ENCODE measurements at regions of chr10 and their contacts with region 1.

Region 1: GRCh38 chr10:32041290-32042028 is 14.8 kb downstream of the KIF5B start:
- DNase-seq: no peak
- ATAC-seq: no peak
- H3K4me3 Mint-ChIP-seq: no peak overlapping the region
- H3K27ac Mint-ChIP-seq: no peak overlapping the region
- H3K4me1 Mint-ChIP-seq: peaks cover 30% of the 10 kb centered on the region
- H3K27me3 Mint-ChIP-seq: no peaks in the 10 kb centered on the region
- CTCF ChIP-seq: no peak

Region 2: DNA sequence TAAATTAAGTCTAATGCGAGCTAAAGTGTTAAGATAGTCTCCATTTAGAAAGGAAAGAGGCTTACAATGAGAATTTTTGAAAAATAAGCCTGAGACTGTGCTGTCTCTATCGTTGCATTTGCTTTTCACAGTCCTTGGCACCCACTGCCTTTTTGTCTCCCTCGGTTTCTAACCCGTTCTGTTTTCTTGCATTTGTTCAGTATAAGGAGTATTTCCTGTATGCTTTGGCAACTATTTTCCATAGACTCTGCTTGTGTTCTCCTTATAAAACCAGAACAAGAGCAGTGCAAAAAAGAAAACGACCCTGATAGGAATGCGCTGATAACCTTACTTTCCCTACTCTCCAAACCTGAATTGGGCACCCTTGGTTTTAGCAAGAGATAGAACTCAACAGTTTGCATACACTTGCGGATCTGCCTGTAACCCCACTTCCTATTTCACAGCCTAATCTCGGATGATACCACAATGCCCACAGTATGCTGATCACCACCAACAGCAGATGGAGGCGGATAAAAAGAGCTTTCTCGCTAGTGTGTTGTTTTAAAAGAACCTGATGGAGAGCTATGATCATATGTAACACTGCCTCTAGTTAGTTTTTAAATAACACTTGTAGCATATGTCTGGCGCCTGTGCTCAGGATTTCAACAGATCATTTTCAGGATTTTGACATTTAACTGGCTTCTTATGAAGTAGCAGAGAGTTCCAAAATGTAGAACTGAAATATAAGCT is 111.3 kb before region 1 on chr10:
- CTCF ChIA-PET with region 1: no interaction called
- POLR2A ChIA-PET with region 1: no interaction called
- intact Hi-C with region 1: no loop called
- DNase-seq: no peak
- ATAC-seq: peak; percentile 12
- H3K4me3 Mint-ChIP-seq: peak overlapping the region; percentile 91
- H3K27ac Mint-ChIP-seq: peak overlapping the region; percentile 88
- H3K4me1 Mint-ChIP-seq: peaks cover 33% of the 10 kb centered on the region
- H3K27me3 Mint-ChIP-seq: no peaks in the 10 kb centered on the region
- CTCF ChIP-seq: no peak

Region 3: GRCh38 chr10:32073659-32074058 is 32.2 kb after region 1 on chr10:
- CTCF ChIA-PET with region 1: no interaction called
- POLR2A ChIA-PET with region 1: no interaction called
- intact Hi-C with region 1: loop called (anchors 1 kb)
- DNase-seq: no peak
- ATAC-seq: no peak
- H3K4me3 Mint-ChIP-seq: no peak overlapping the region
- H3K27ac Mint-ChIP-seq: no peak overlapping the region
- H3K4me1 Mint-ChIP-seq: no peaks in the 10 kb centered on the region
- H3K27me3 Mint-ChIP-seq: peaks cover 10% of the 10 kb centered on the region
- CTCF ChIP-seq: no peak

Measured in activated B cell treated with CpG ODN at 0.5 μM for 24 hours (primary cell).